ENCODE measurements at regions of chr3 and their contacts with region 1.

Region 1: DNA sequence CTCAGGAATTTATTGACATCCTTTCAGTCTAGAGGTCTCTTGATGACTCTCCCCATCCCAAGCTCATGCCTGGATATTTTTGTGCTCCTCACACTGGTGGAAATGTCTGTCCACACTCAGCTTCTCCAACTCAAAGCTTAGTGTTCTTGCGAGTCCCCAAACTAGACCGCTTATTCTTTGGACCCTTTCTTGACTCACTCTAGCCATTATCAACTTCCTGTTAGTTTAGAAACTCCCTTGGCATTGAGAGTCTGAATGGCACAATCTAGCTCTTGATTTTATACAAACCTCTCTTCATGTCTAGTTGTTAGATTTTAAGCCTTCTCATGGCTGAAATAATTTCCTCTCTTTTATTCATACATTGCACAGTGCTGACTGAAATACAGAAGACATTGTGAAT is 19.6 kb downstream of the TIGIT start:
- DNase-seq: no peak
- CTCF ChIP-seq: no peak

Region 2: DNA sequence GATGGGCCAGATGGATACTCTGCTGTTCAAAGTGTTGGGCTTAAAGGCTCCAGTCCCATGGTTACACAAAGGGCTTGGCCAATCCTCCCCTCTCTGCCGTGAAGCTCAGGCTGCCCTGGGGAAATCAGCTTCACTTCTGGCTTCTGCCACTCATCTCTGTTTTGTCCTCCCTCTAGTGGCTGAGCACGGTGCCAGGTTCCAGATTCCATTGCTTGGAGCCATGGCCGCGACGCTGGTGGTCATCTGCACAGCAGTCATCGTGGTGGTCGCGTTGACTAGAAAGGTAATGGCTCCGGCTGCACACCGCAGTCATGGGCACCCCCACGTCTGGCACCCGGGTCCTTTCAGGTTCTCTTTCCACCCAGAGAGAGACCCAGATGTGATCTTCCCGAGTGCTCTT is 14.0 kb before region 1 on chr3:
- CTCF ChIA-PET with region 1: interaction called, 76 read pairs
- POLR2A ChIA-PET with region 1: no interaction called
- DNase-seq: no peak
- CTCF ChIP-seq: peak; percentile 27